Left ventricle myocardium inferior (tissue), 1 donor: ENCODE measurements at regions of chrX and their contacts with region 1.

Region 1: DNA sequence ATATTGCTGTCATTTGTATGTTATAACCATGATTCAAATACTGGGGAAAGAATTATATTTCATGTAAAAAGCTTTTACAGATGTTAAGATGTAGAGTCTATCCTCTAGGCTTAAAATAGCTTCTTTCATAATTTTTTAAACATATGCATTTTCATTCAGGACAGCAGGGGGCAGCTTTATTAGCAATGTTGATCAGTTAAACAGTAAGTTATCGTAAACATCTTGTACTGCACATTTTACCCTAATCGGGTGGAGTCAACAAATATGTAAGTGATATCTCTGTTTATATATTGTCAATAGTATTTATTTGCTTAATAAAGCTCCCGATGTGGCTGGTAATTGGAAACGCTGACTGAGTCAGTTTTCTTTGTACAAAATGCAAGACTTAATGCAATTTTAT is 142.5 kb upstream of the MED14 start:
- DNase-seq: no peak
- H3K4me3 ChIP-seq: no peak overlapping the region
- H3K27ac ChIP-seq: no peak overlapping the region
- H3K4me1 ChIP-seq: no peaks in the 10 kb centered on the region
- H3K27me3 ChIP-seq: no peaks in the 10 kb centered on the region
- CTCF ChIP-seq: peak; percentile 57

Region 2: GRCh38 chrX:40719218-40719617 is 158.7 kb before region 1 on chrX:
- intact Hi-C with region 1: no loop called
- DNase-seq: no peak
- H3K4me3 ChIP-seq: no peak overlapping the region
- H3K27ac ChIP-seq: no peak overlapping the region
- H3K4me1 ChIP-seq: peaks cover 12% of the 10 kb centered on the region
- H3K27me3 ChIP-seq: no peaks in the 10 kb centered on the region
- CTCF ChIP-seq: no peak

Region 3: DNA sequence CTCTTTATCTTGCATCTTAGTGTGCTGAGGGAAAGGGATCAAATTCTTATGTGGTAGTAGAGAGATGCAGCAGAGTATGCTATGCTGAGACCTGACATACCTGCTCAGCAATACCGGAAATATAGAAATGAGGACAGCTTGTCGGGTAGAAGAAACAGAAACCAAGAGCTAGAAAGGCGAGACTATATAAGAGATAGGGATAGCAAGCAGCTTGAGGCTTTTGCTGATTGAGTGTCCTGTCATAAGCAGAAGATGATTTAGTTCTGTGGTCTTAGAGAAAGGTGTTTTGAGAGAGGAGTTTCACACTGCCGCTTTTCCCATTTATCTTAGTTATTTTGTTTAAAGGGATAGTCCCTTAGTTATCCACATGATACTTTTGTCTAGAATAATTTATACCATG is 239.1 kb after region 1 on chrX:
- intact Hi-C with region 1: loop called (anchors 10 kb)
- DNase-seq: no peak
- H3K4me3 ChIP-seq: no peak overlapping the region
- H3K27ac ChIP-seq: no peak overlapping the region
- H3K4me1 ChIP-seq: peaks cover 68% of the 10 kb centered on the region
- H3K27me3 ChIP-seq: no peaks in the 10 kb centered on the region
- CTCF ChIP-seq: no peak

Region 4: GRCh38 chrX:41209853-41210252 is 332.0 kb after region 1 on chrX:
- intact Hi-C with region 1: no loop called
- DNase-seq: no peak
- H3K4me3 ChIP-seq: no peak overlapping the region
- H3K27ac ChIP-seq: no peak overlapping the region
- H3K4me1 ChIP-seq: no peaks in the 10 kb centered on the region
- H3K27me3 ChIP-seq: no peaks in the 10 kb centered on the region
- CTCF ChIP-seq: no peak